Activated T-helper 1 cell treated with anti-CD3 and anti-CD28 coated beads, Interleukin-12 subunit alpha, Interleukin-12 subunit beta, Interleukin-2, Interleukin-4 antibody, amounts not matched to agents 30 ng/mL and 10 ng/mL and 1 ng/mL, durations not matched to agents 14 hours and 24 hours and 36 hours (primary cell): ENCODE measurements at regions of chr21 and their contacts with region 1.

Region 1: DNA sequence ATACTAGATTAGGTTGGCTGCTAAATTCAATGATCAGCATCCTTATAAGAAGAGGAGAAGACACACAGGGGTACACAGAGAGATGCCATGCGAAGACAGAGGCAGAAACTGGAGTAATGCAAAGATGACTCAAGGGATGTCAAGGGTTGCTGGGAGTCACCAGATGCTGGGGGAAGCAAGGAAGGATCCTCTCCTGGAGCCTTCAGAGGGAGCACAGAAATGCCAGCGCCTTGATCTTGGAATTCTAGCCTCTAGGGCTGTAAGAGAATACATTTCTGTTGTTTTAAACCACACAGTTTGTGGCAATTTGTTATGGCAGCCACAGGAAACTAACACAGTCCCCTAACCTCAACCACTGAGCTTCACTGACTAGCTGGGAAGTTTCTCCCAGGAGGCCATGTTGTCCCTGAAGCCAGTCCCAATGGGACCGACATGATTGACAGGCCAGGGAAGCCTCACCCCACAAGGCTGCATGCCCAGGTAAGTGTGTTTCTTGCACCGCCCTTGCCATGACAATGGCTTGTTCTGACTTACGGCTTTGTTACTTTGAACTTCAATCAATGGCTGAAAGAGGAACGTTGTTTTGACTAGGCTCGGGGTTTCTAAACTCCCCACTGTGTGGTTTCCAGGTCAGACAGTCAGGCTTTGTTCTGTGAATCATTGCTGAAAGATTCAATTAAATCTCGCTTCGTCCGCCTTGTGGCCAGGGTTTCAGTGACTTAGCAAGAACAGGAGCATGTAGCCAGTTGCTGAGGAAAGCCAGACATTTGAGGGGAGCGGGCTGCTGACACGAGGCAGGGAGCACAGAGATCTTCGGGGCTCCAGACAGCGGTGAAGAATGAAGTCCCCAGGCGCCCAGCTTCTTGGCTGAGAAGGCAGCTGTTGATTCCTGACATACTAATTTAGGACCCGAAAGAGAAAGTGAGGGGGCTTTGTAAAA is 62.3 kb downstream of the RUNX1 start:
- DNase-seq: peak; percentile 70
- H3K4me3 Mint-ChIP-seq: peak overlapping the region; percentile 62
- H3K27ac Mint-ChIP-seq: peak overlapping the region; percentile 97
- H3K4me1 Mint-ChIP-seq: peaks cover 92% of the 10 kb centered on the region
- H3K27me3 Mint-ChIP-seq: no peaks in the 10 kb centered on the region

Region 2: DNA sequence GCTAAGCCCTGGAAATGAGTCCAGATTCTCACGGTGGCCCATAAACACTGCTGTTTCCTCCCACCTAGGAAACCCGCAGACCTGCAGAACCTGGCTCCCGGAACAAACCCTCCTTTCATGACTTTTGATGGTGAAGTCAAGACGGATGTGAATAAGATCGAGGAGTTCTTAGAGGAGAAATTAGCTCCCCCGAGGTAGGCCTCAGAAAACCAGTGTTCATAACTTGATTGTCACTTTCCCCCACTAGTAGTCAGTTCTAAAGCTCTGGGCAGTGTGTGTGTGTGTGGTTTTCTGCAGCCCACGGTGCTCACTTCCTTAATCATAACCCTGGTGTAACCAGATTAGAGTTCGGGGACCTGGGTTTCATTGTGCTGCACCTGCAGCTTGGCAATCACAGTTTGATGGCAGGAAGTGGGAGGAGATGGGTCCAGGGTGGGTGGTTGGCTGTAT is 278.9 kb before region 1 on chr21:
- intact Hi-C with region 1: loop called (anchors 5 kb)
- DNase-seq: peak; percentile 28
- H3K4me3 Mint-ChIP-seq: peak overlapping the region; percentile 48
- H3K27ac Mint-ChIP-seq: no peak overlapping the region
- H3K4me1 Mint-ChIP-seq: peaks cover 24% of the 10 kb centered on the region
- H3K27me3 Mint-ChIP-seq: peaks cover 16% of the 10 kb centered on the region

Region 3: DNA sequence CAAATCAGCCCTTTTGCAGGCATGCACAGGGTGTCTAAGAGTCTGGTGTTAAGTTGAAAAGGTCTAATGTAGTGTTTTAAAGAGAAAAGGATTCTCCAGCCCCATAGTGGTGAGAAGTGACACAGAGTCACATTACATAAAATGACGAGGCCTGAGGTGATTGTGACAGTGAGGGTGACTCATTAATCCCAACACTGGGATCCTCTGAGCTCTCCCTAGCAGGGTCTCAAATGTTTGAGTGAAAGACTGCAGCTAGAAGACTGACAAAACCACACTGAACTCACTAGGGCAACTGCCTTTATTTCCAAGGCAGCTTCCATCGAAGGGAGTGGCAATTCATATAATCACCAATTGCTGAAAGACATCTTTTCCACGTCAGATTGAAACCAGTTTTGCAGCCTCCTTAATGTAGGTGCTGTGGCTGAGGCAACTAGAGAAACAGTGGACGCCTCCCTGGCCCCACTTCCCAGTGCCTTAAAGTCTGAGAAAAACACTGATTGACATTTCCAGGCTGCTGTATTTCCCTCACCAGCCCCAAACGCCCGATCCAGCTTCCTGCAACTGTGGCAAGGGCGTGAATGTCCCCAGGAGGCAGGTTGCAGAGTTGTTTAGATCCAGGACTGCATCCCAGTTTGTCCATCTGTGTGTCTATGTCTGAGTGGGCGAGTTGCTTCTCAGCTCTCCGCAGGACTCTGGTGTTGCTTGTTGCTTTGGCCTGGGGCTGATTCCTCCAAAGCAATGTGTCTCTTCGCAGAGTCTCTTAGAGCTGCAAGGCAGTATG is 19.1 kb before region 1 on chr21:
- intact Hi-C with region 1: loop called (anchors 1 kb)
- DNase-seq: no peak
- H3K4me3 Mint-ChIP-seq: peak overlapping the region; percentile 80
- H3K27ac Mint-ChIP-seq: peak overlapping the region; percentile 94
- H3K4me1 Mint-ChIP-seq: peaks cover 91% of the 10 kb centered on the region
- H3K27me3 Mint-ChIP-seq: peaks cover 2% of the 10 kb centered on the region

Region 4: DNA sequence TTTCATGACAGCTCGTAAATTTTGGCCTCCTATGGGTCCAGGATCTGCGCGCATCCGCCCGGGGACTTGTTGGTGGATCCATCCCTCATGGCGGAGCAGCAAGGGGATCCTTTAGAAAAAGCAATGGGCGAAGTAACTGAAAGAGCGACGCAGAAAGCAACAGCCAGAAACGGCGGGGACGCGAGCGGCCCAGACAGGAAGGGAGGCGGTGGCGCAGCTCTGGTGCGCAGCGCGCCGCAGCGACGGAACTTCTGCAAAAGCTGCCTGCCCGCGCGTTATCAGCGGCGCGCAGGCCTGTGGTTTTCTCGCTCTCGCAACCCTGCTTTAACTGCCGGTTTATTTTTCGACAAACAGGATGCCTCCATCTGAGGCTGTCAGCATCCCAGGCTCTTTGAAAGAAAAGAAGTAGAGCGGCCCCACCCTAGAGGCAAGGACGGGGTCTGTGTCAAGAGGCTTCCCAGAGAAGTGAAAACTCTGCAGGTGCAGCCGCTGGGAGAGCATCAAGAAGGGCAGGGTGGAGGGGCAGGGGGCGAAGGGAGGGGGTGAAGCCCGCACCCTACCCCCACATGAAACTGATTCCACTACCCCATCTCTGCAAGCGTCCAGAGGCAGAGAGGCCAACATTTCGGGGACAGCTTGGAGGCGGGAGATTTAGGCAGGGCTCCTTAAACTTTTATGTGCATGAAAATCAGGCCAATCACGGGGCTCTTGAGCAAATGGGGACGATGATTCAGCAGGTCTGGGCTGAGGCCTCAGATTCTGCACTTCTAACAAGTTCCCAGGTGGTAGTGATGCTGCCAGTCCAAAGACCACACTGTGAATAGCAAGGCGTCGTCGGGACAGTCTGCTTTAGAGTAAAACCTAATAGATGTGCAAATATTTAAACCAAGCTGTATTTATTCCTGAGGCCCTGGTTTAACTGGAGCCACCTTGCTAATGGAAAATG is 40.1 kb after region 1 on chr21:
- intact Hi-C with region 1: loop called (anchors 1 kb)
- DNase-seq: peak; percentile 83
- H3K4me3 Mint-ChIP-seq: peak overlapping the region; percentile 85
- H3K27ac Mint-ChIP-seq: peak overlapping the region; percentile 99
- H3K4me1 Mint-ChIP-seq: peaks cover 91% of the 10 kb centered on the region
- H3K27me3 Mint-ChIP-seq: no peaks in the 10 kb centered on the region

Region 5: GRCh38 chr21:35138665-35139381 is 152.0 kb after region 1 on chr21:
- intact Hi-C with region 1: loop called (anchors 2 kb)
- DNase-seq: no peak
- H3K4me3 Mint-ChIP-seq: peak overlapping the region; percentile 62
- H3K27ac Mint-ChIP-seq: peak overlapping the region; percentile 93
- H3K4me1 Mint-ChIP-seq: peaks cover 27% of the 10 kb centered on the region
- H3K27me3 Mint-ChIP-seq: no peaks in the 10 kb centered on the region

Region 6: GRCh38 chr21:35528116-35529042 is 541.5 kb after region 1 on chr21:
- intact Hi-C with region 1: loop called (anchors 5 kb)
- DNase-seq: peak; percentile 26
- H3K4me3 Mint-ChIP-seq: peak overlapping the region; percentile 84
- H3K27ac Mint-ChIP-seq: peak overlapping the region; percentile 93
- H3K4me1 Mint-ChIP-seq: peaks cover 64% of the 10 kb centered on the region
- H3K27me3 Mint-ChIP-seq: no peaks in the 10 kb centered on the region